Right ventricle myocardium inferior (tissue), 1 donor: ENCODE measurements at regions of chr4 and their contacts with region 1.

Region 1: GRCh38 chr4:83639849-83640493 is 104.1 kb downstream of the GPAT3 start:
- DNase-seq: no peak
- ATAC-seq: peak; percentile 80

Region 2: GRCh38 chr4:83490876-83491450 is 149.0 kb before region 1 on chr4:
- intact Hi-C with region 1: loop called (anchors 5 kb)
- DNase-seq: no peak
- ATAC-seq: no peak

Region 3: DNA sequence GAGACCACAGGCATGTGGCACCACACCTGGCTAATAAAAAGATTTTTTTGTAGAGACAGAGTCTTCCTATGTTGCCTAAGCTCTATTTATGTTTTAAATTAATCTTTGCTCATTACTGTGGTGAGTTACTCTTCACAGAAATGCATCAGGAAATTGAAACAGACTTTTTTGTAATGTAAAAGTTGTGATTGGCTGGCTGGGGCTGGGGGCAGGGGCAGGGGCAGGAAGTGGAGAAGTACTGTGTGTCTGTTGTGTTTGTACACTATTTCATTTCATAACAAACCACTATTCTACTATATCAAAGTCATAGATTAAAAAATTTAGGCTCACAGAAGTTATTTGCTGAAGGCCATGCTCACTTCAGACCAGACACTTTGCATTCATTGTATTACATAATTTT is 136.0 kb before region 1 on chr4:
- intact Hi-C with region 1: loop called (anchors 1 kb)
- DNase-seq: no peak
- ATAC-seq: no peak

Region 4: GRCh38 chr4:83846193-83846830 is 206.3 kb after region 1 on chr4:
- intact Hi-C with region 1: loop called (anchors 5 kb)
- DNase-seq: no peak
- ATAC-seq: peak; percentile 70

Region 5: GRCh38 chr4:84024405-84024804 is 384.4 kb after region 1 on chr4:
- intact Hi-C with region 1: no loop called
- DNase-seq: no peak
- ATAC-seq: no peak

Region 6: GRCh38 chr4:84503495-84504437 is 863.8 kb after region 1 on chr4:
- intact Hi-C with region 1: loop called (anchors 10 kb)
- DNase-seq: no peak
- ATAC-seq: no peak